ENCODE measurements at regions of chr6 and their contacts with region 1.

Region 1: DNA sequence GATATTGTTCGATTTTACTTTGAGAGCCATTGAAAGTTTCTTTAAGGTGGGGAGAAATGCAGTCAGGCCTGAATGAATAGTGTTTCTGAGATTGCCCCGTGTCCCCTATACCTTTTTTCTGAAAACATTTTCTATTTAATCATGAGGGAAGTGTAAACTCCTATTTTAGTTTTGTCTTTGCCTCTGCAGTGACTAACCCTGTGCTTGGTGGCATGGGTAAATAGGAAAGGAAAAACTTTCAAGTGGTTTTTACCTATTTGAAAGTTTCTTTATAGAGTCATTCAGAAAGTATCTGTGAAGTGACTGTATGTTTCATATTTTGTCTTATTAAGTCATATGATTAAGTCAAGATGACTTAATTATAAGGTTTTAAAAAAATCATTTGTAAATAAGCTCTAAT is 14.5 kb downstream of the SNRNP48 start:
- DNase-seq: no peak
- ATAC-seq: no peak
- H3K4me3 ChIP-seq: no peak overlapping the region
- H3K27ac ChIP-seq: no peak overlapping the region
- H3K4me1 ChIP-seq: no peaks in the 10 kb centered on the region
- H3K27me3 ChIP-seq: no peaks in the 10 kb centered on the region
- CTCF ChIP-seq: no peak

Region 2: GRCh38 chr6:7295916-7296315 is 308.6 kb before region 1 on chr6:
- intact Hi-C with region 1: loop called in 1 of 2 experiments (anchors 5 kb)
- DNase-seq: no peak
- ATAC-seq: no peak
- H3K4me3 ChIP-seq: no peak overlapping the region
- H3K27ac ChIP-seq: no peak overlapping the region
- H3K4me1 ChIP-seq: no peaks in the 10 kb centered on the region
- H3K27me3 ChIP-seq: no peaks in the 10 kb centered on the region
- CTCF ChIP-seq: no peak

Region 3: DNA sequence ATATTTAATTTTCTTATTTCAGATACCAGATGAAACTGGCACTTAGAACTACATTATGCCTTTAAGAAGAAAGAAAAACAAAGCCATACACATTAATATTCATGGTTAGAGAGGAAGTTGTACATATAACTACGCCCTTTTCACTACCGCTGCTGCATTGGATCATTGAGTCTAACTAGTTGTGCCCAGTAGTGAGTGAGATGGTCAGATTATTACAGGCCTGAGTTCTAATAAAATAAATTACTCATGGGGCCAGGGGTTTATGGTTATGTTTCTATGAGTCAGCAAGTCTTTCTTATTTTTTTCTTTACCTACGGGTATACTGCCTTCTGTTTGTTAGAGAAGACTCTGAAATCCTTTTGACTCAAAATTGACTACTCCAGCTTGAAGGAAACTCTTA is 203.4 kb before region 1 on chr6:
- intact Hi-C with region 1: loop called (anchors 5 kb)
- DNase-seq: no peak
- ATAC-seq: no peak
- H3K4me3 ChIP-seq: no peak overlapping the region
- H3K27ac ChIP-seq: no peak overlapping the region
- H3K4me1 ChIP-seq: no peaks in the 10 kb centered on the region
- H3K27me3 ChIP-seq: no peaks in the 10 kb centered on the region
- CTCF ChIP-seq: no peak

Region 4: GRCh38 chr6:8193541-8193940 is 589.0 kb after region 1 on chr6:
- intact Hi-C with region 1: no loop called
- DNase-seq: no peak
- ATAC-seq: no peak
- H3K4me3 ChIP-seq: no peak overlapping the region
- H3K27ac ChIP-seq: no peak overlapping the region
- H3K4me1 ChIP-seq: no peaks in the 10 kb centered on the region
- H3K27me3 ChIP-seq: peaks cover 0 to 4% (median 0%) of the 10 kb centered on the region in 3 donors
- CTCF ChIP-seq: no peak

Measured in psoas muscle (tissue), 8 donors.